ENCODE measurements at regions of chr1 and their contacts with region 1.

Region 1: GRCh38 chr1:50929376-50929958 is 30.6 kb downstream of the FAF1 start:
- DNase-seq: no peak
- ATAC-seq: no peak
- H3K4me3 Mint-ChIP-seq: no peak overlapping the region
- H3K27ac Mint-ChIP-seq: no peak overlapping the region
- H3K4me1 Mint-ChIP-seq: peaks cover 37% of the 10 kb centered on the region
- H3K27me3 Mint-ChIP-seq: no peaks in the 10 kb centered on the region

Region 2: GRCh38 chr1:50684185-50684584 is 245.3 kb before region 1 on chr1:
- CTCF ChIA-PET with region 1: no interaction called
- POLR2A ChIA-PET with region 1: no interaction called
- intact Hi-C with region 1: no loop called
- DNase-seq: no peak
- ATAC-seq: no peak
- H3K4me3 Mint-ChIP-seq: no peak overlapping the region
- H3K27ac Mint-ChIP-seq: no peak overlapping the region
- H3K4me1 Mint-ChIP-seq: no peaks in the 10 kb centered on the region
- H3K27me3 Mint-ChIP-seq: no peaks in the 10 kb centered on the region

Region 3: GRCh38 chr1:50940291-50940690 is 10.8 kb after region 1 on chr1:
- CTCF ChIA-PET with region 1: interaction called, 10 read pairs
- POLR2A ChIA-PET with region 1: no interaction called
- intact Hi-C with region 1: no loop called
- DNase-seq: no peak
- ATAC-seq: no peak
- H3K4me3 Mint-ChIP-seq: no peak overlapping the region
- H3K27ac Mint-ChIP-seq: no peak overlapping the region
- H3K4me1 Mint-ChIP-seq: peaks cover 27% of the 10 kb centered on the region
- H3K27me3 Mint-ChIP-seq: no peaks in the 10 kb centered on the region

Region 4: DNA sequence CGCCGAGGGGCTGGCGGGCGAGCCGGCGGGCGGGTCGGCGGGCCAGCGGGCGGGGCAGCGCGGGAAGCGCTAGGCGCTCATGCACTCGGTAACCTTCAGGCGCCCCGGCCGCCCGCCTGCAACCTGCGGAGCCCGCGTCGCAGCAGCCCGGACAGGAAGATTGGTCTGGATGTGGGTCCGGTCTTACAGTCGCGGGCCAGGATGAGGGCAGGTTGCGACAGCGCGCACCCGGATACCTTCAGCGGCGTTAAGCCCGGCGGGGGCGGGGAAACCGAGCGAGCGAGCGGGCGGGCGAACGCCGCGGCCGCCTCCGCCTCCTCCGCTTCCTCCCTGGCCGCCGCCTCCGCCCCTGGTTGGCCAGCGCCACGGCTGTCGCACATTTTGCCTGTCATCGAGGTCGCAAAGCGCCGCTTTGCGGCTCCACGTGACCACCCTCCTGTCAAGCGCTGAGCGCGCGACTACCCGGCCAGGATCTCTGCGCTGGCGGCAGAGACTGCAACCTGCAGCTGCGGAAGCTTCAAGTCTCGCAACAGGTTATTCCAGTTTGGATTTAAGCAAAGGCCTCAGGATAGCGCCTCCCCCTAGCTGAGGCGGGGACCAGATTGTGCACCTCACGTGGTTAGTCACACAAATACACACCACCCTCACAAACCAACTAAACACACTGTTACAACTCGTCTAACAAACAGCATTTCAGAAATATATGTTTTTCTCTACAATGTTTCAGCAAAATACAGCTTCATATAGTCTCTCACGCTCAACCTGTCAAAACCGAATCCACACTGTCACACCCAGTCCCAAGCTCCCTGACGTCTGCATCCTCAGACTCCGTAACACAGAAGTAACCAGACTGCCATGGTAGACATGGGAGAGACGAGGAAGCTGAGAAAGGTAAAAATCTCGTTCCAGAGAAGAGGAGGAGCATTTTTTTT is 30.7 kb after region 1 on chr1 and contains the start of gene FAF1:
- CTCF ChIA-PET with region 1: interaction called, 13 read pairs
- POLR2A ChIA-PET with region 1: no interaction called
- intact Hi-C with region 1: loop called in 1 of 2 experiments (anchors 2 kb)
- DNase-seq: peak; percentile 98
- ATAC-seq: peak; percentile 91
- H3K4me3 Mint-ChIP-seq: peak within 1 kb of the TSS; percentile 80
- H3K27ac Mint-ChIP-seq: peak within 1 kb of the TSS; percentile 96
- H3K4me1 Mint-ChIP-seq: peaks cover 24% of the 10 kb centered on the region
- H3K27me3 Mint-ChIP-seq: no peaks in the 10 kb centered on the region
- total RNA-seq, gene FAF1: 64.5 to 73.1 TPM

Region 5: DNA sequence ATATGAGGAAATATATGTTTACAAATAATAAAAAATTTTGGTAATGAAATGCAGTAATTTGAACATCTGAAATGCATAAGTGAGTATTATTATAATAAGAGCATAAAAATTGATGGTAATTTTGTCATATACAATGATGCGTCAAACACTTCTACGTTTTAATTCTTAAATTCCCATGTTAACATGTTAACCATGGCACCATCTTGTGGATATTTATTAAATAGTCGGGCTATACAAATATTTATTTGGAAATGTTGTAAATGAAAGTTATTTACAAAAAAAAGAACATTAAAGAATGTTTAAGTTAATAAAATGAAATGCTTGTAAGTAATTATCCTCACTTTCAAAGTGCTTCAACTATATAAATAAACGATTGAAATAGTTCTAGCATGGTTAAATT is 115.4 kb after region 1 on chr1:
- CTCF ChIA-PET with region 1: interaction called, 4 read pairs
- POLR2A ChIA-PET with region 1: no interaction called
- intact Hi-C with region 1: loop called in 1 of 2 experiments (anchors 10 kb)
- DNase-seq: no peak
- ATAC-seq: no peak
- H3K4me3 Mint-ChIP-seq: no peak overlapping the region
- H3K27ac Mint-ChIP-seq: no peak overlapping the region
- H3K4me1 Mint-ChIP-seq: no peaks in the 10 kb centered on the region
- H3K27me3 Mint-ChIP-seq: peaks cover 7% of the 10 kb centered on the region